PC-9 (cell line): ENCODE measurements at regions of chr5 and their contacts with region 1.

Region 1: GRCh38 chr5:115296124-115297022 is at the start of gene CCDC112:
- DNase-seq: peak; percentile 56 to 85
- H3K4me3 ChIP-seq: peak within 1 kb of the TSS; percentile 94
- H3K27ac ChIP-seq: no peak within 1 kb of the TSS
- H3K4me1 ChIP-seq: peaks cover 10% of the 10 kb centered on the region
- H3K27me3 ChIP-seq: no peaks in the 10 kb centered on the region
- CTCF ChIP-seq: no peak
- total RNA-seq, gene CCDC112: 4.3 and 4.8 TPM in 2 replicates

Region 2: GRCh38 chr5:114935490-114935889 is 360.9 kb before region 1 on chr5:
- CTCF ChIA-PET with region 1: no interaction called
- POLR2A ChIA-PET with region 1: no interaction called
- intact Hi-C with region 1: no loop called
- DNase-seq: no peak
- H3K4me3 ChIP-seq: no peak overlapping the region
- H3K27ac ChIP-seq: no peak overlapping the region
- H3K4me1 ChIP-seq: no peaks in the 10 kb centered on the region
- H3K27me3 ChIP-seq: peaks cover 9% of the 10 kb centered on the region; the same call in 1 of the 2 replicates
- CTCF ChIP-seq: no peak

Region 3: DNA sequence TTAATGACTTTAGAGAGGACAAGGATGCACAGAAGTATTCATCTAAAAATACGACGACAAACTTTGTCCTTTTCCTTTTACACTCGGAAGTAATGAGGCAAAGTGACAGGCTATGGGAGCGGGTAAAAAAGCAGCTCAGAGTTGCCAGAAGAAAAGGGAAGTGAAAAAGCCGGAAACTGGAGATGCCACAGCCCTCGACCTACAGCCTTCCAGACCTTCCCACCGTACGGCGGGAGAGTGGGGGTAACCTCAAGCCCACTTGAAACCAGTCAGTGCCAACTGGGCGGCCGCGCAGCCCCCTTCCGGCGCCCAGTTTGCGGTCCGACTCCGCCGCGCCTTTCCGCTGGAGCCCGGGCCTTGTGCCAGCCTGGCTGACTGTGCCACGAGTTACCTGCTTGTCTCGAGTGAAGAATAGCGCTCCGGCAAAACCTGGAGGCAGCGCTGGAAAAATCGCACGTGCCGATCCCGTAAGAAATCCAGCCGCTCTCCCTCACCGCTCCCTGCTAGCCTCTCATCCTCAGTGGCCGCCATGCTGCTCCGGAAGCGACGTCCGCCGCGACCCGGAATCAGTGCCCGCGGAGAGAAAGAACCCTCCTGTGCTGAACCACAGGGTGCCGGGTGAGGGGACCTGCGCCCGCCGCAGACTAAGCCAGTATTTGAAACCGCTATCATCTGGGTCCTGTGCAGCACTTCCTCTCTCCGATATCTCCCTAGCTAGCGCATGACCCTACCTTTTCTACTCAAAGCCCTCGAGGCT is 33.9 kb before region 1 on chr5 and contains the start of gene PGGT1B:
- CTCF ChIA-PET with region 1: interaction called, 16 read pairs
- POLR2A ChIA-PET with region 1: interaction called, 3 read pairs
- intact Hi-C with region 1: loop called (anchors 5 kb)
- DNase-seq: peak; percentile 45 to 61
- H3K4me3 ChIP-seq: peak within 1 kb of the TSS; percentile 86
- H3K27ac ChIP-seq: peak within 1 kb of the TSS; percentile 63
- H3K4me1 ChIP-seq: peaks cover 22% of the 10 kb centered on the region
- H3K27me3 ChIP-seq: no peaks in the 10 kb centered on the region
- CTCF ChIP-seq: no peak
- total RNA-seq, gene PGGT1B: 30.9 and 31.1 TPM in 2 replicates

Region 4: DNA sequence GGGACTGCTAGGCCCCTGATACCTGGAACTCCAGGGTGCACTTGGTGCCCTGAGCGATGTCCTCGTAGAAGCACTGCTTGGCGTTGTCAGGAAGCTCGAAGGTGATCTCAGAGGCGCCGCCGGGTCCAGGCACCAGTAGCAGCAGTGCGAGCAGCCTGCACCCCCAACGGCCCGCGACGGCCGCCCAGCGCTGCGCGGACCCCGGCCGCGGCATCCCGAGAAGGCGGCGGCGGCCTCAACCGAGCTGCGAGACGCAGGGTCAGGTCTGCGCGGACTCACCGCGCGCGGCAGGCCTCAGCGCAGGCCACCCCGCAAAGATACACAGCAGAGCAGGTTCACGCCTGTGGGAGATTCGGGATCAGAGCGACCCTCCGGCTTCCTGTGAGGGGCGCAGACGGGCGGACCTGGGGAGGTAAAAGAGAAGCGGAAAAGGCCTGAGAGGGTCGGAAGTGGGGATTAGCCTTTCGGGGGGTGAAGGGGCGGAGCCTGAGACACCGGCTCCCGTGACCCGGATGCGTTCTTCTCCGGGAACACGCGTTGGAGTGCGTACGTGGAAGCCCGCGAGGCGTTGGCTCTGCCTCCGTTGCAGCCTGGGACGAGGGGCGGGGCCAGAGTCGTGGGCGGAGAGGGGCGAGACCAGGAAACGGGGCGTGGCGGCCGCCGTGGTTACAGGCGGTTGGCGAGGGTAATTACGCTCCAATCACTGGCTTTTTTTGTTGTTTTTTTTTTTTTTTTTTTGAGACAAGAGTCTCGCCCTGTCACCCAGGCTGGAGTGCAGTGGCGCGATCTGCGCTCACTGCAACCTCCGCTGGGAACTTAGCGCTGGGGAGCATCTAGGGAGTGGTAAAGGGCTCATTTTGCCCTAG is 329.4 kb after region 1 on chr5 and contains the start of gene TMED7:
- CTCF ChIA-PET with region 1: no interaction called
- POLR2A ChIA-PET with region 1: no interaction called
- intact Hi-C with region 1: loop called (anchors 2 kb)
- DNase-seq: peak; percentile 91 to 98
- H3K4me3 ChIP-seq: peak within 1 kb of the TSS; percentile 98
- H3K27ac ChIP-seq: peak within 1 kb of the TSS; percentile 81
- H3K4me1 ChIP-seq: peaks cover 19% of the 10 kb centered on the region
- H3K27me3 ChIP-seq: no peaks in the 10 kb centered on the region
- CTCF ChIP-seq: no peak
- total RNA-seq, gene TMED7: 70.7 and 78.9 TPM in 2 replicates